Psoas muscle (tissue), 8 donors: ENCODE measurements at regions of chr11 and their contacts with region 1.

Region 1: GRCh38 chr11:2382936-2383851 is 6.1 kb downstream of the CD81 start:
- DNase-seq: peak; percentile 81 to 91
- ATAC-seq: peak; percentile 79 to 93 (median 91)
- H3K4me3 ChIP-seq: peak overlapping the region; percentile 52
- H3K27ac ChIP-seq: peak overlapping the region; percentile 87
- H3K4me1 ChIP-seq: peaks cover 64% of the 10 kb centered on the region
- H3K27me3 ChIP-seq: no peaks in the 10 kb centered on the region
- CTCF ChIP-seq: no peak

Region 2: DNA sequence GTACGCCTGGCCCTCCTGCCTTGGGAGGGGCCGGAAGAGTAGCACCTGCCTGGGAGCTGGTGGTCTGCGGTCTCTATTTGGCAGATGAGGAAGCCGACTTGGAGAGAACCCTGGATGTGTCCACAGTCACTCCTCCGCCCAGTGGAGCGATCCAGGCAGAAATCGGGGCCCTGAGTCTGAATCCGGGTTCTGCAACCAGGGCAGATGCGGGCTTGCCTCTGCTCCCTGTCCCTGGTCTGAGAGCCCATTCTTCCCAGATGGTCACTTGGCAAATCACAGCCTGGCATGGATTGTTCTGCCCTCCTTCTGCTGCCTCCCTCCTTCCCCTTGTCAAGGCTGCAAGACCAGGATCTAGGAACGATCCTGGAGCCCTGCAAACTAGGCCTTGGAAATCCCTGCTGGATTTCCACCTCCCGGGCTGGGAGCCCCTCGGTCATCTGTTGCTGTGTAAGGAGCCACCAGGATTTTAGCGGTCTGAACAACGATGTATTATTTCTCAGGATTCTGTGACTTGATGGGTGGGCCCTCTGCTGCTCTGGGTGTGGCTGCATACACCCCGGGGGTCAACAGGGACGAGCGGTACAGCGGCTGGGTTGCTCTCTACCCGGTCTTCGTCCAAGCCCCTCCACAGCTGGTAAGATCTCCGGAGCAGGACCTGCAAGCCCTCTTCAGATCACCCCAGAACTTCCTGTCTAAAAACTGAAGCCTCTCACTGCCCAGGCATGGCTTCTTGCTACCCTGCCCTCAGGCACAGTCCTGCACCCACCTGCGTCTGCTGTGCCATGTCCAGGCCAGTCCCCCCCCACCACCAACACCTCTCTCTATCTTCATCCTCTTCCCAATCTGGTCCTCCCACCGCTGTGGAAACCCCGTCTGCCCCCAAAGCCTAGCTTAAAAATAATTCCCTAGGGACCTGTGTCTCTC is 110.7 kb before region 1 on chr11:
- intact Hi-C with region 1: no loop called
- DNase-seq: peak in 1 of 2 donors; percentile 33
- ATAC-seq: no peak
- H3K4me3 ChIP-seq: no peak overlapping the region
- H3K27ac ChIP-seq: no peak overlapping the region
- H3K4me1 ChIP-seq: peaks cover 4% of the 10 kb centered on the region
- H3K27me3 ChIP-seq: peaks cover 0 to 75% (median 34%) of the 10 kb centered on the region in 3 donors
- CTCF ChIP-seq: no peak

Region 3: GRCh38 chr11:2342981-2343380 is 40.2 kb before region 1 on chr11:
- intact Hi-C with region 1: no loop called
- DNase-seq: peak in 1 of 2 donors; percentile 34
- ATAC-seq: no peak
- H3K4me3 ChIP-seq: no peak overlapping the region
- H3K27ac ChIP-seq: no peak overlapping the region
- H3K4me1 ChIP-seq: no peaks in the 10 kb centered on the region
- H3K27me3 ChIP-seq: no peaks in the 10 kb centered on the region
- CTCF ChIP-seq: no peak

Region 4: GRCh38 chr11:2399488-2400068 is 16.4 kb after region 1 on chr11:
- intact Hi-C with region 1: loop called in 1 of 2 experiments (anchors 2 kb)
- DNase-seq: no peak
- ATAC-seq: peak in 2 of 4 donors; percentile 5 to 22
- H3K4me3 ChIP-seq: peak overlapping the region; percentile 86
- H3K27ac ChIP-seq: peak overlapping the region; percentile 98
- H3K4me1 ChIP-seq: peaks cover 25% of the 10 kb centered on the region
- H3K27me3 ChIP-seq: no peaks in the 10 kb centered on the region
- CTCF ChIP-seq: no peak

Region 5: GRCh38 chr11:2489083-2489482 is 105.9 kb after region 1 on chr11:
- intact Hi-C with region 1: no loop called
- DNase-seq: no peak
- ATAC-seq: no peak
- H3K4me3 ChIP-seq: no peak overlapping the region
- H3K27ac ChIP-seq: no peak overlapping the region
- H3K4me1 ChIP-seq: no peaks in the 10 kb centered on the region
- H3K27me3 ChIP-seq: peaks cover 0 to 17% (median 0%) of the 10 kb centered on the region in 3 donors
- CTCF ChIP-seq: no peak